ENCODE measurements at regions of chr5 and their contacts with region 1.

Region 1: DNA sequence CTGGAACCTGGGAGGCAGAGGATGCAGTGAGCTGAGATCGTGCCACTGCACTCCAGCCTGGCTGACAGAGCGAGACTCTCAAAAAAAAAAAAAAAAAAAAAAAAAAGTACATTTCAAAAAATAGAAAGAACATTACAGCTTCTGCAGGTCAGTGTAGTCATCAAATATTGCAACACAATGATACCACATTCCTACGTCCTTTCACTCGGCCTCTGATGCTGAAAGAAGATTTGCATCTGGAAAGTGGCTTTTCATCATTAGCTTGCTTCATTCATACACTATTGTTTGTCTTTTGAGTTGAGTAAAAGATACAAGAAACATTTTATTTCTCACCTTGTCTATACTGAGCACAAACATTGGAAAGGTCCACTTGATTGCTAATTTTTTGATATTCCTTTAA is 59.6 kb upstream of the CPLANE1 start:
- DNase-seq: no peak
- H3K4me3 Mint-ChIP-seq: no peak overlapping the region
- H3K27ac Mint-ChIP-seq: no peak overlapping the region
- H3K4me1 Mint-ChIP-seq: no peaks in the 10 kb centered on the region
- H3K27me3 Mint-ChIP-seq: no peaks in the 10 kb centered on the region

Region 2: DNA sequence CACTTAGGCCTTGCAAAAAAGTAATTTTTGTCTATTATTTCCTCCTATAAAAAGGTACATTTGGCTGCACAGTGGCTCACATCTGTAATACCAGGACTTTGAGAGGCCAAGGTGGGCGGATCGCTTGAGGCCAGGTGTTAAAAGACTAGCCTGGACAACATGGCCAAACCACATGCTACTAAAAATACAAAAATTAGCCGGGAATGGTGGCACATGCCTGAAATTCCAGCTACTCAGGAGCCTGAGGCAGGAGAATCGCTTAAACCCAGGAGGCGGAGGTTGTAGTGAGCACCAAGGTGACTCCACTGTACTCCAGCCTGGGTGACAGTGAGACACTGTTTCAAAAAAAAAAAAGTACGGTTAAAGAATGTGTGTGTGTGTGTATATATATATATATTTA is 46.4 kb after region 1 on chr5:
- CTCF ChIA-PET with region 1: no interaction called
- intact Hi-C with region 1: loop called (anchors 5 kb)
- DNase-seq: no peak
- H3K4me3 Mint-ChIP-seq: no peak overlapping the region
- H3K27ac Mint-ChIP-seq: no peak overlapping the region
- H3K4me1 Mint-ChIP-seq: peaks cover 3% of the 10 kb centered on the region
- H3K27me3 Mint-ChIP-seq: no peaks in the 10 kb centered on the region

Measured in activated naive CD4-positive, alpha-beta T cell treated with anti-CD3 and anti-CD28 coated beads for 36 hours (primary cell).